Ovary (tissue), 10 donors: ENCODE measurements at regions of chr17 and their contacts with region 1.

Region 1: DNA sequence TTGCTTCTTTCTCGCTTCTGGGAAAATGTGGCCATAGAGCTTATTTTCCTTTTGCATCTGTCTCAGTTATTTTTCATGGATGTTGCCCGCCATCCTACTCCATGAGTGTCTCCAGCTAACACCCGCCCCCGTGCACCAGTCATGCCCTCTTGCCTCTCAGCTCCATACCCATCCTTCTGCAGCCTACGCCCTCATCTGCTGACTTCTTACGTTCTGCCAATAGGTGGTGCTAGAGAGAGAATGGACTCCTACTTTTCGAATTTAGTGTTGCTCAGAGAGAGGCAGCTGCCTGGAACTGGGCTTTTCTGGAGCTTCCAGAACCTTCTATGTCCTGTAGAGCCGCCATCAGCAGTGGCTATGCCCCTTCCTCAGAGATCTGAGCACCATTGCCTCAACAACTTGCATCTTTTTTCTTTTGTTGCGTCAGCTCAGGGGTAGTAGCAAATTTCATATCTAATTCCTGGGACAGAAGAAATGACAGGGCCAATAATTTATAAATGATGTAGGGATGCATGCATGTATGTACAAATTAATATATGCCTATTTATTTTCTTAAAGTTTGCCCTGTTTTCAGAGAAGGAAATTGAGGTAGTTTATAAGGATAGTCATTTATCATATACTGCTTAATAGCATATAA is 119.7 kb upstream of the MYOCD start:
- DNase-seq: peak; percentile 22 to 46 (median 24)
- H3K4me3 ChIP-seq: no peak overlapping the region
- H3K27ac ChIP-seq: no peak overlapping the region
- H3K4me1 ChIP-seq: peaks cover 3% of the 10 kb centered on the region
- H3K27me3 ChIP-seq: no peaks in the 10 kb centered on the region
- CTCF ChIP-seq: peak; percentile 31 to 50 (median 40)
- EP300 ChIP-seq: no peak
- POLR2A ChIP-seq: no peak

Region 2: GRCh38 chr17:12256380-12256995 is 289.5 kb before region 1 on chr17:
- intact Hi-C with region 1: loop called in 1 of 4 experiments (anchors 10 kb)
- DNase-seq: peak; percentile 39 to 61 (median 56)
- H3K4me3 ChIP-seq: no peak overlapping the region
- H3K27ac ChIP-seq: no peak overlapping the region
- H3K4me1 ChIP-seq: no peaks in the 10 kb centered on the region
- H3K27me3 ChIP-seq: no peaks in the 10 kb centered on the region
- CTCF ChIP-seq: peak; percentile 62 to 79 (median 64)
- EP300 ChIP-seq: no peak
- POLR2A ChIP-seq: no peak

Region 3: GRCh38 chr17:12463102-12463501 is 82.9 kb before region 1 on chr17:
- intact Hi-C with region 1: no loop called
- DNase-seq: no peak
- H3K4me3 ChIP-seq: no peak overlapping the region
- H3K27ac ChIP-seq: no peak overlapping the region
- H3K4me1 ChIP-seq: no peaks in the 10 kb centered on the region
- H3K27me3 ChIP-seq: no peaks in the 10 kb centered on the region
- CTCF ChIP-seq: no peak
- EP300 ChIP-seq: no peak
- POLR2A ChIP-seq: no peak

Region 4: GRCh38 chr17:12485361-12485906 is 60.6 kb before region 1 on chr17:
- intact Hi-C with region 1: no loop called
- DNase-seq: no peak
- H3K4me3 ChIP-seq: no peak overlapping the region
- H3K27ac ChIP-seq: no peak overlapping the region
- H3K4me1 ChIP-seq: no peaks in the 10 kb centered on the region
- H3K27me3 ChIP-seq: no peaks in the 10 kb centered on the region
- CTCF ChIP-seq: no peak
- EP300 ChIP-seq: no peak
- POLR2A ChIP-seq: no peak